Spleen (tissue), 13 donors: ENCODE measurements at regions of chr17 and their contacts with region 1.

Region 1: DNA sequence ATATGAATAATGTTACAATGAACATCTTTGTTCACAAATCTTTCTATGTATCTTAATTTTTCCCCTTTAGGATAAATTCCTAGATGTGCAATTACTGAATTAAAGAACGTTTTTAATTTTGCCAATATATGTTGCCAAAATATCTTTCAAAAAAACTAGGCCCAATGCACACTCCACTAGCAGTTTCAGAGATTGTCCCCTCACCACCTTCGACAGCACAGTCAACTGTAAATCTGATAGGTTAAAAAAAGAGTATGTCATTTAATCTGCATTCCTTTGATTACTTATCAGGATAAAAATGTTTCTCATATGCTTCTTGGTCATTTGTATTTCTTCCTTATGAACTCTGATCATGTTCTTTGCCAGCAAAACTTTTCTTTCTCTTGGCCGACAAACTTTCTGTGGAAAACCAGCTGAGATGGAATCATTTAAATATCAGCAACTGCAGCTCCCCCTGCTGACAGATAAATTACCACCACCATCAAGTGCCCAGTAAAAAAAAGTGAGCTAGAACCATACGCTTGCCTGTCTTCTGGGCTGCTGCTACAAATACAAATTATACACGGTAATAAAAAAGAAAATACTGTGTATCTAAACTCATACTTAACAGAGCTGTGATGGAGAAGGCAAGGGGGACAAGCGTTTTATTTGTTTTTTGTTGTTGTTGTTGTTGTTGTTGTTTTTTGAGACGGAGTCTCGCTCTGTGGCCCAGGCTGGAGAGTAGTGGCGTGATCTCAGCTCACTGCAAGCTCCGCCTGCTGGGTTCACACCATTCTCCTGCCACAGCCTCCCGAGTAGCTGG is 19.6 kb upstream of the KANSL1 start:
- DNase-seq: no peak
- H3K4me3 ChIP-seq: no peak overlapping the region
- H3K27ac ChIP-seq: no peak overlapping the region
- H3K4me1 ChIP-seq: peaks cover 4 to 28% (median 8%) of the 10 kb centered on the region in 6 donors
- H3K27me3 ChIP-seq: no peaks in the 10 kb centered on the region
- CTCF ChIP-seq: peak; percentile 64 to 89 (median 77)
- POLR2A ChIP-seq: no peak

Region 2: DNA sequence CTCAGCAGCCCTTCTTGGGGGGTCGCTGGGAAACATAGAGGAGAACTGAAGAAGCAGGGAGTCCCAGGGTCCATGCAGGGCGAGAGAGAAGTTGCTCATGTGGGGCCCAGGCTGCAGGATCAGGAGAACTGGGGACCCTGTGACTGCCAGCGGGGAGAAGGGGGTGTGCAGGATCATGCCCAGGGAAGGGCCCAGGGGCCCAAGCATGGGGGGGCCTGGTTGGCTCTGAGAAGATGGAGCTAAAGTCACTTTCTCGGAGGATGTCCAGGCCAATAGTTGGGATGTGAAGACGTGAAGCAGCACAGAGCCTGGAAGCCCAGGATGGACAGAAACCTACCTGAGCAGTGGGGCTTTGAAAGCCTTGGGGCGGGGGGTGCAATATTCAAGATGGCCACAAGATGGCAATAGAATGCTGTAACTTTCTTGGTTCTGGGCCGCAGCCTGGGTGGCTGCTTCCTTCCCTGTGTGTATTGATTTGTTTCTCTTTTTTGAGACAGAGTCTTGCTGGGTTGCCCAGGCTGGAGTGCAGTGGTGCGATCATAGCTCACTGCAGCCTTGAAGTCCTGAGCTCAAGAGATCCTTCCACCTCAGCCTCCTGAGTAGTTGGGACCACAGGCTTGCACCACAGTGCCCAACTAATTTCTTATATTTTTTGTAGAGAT is 210.4 kb before region 1 on chr17:
- intact Hi-C with region 1: loop called (anchors 5 kb)
- DNase-seq: peak; percentile 88
- H3K4me3 ChIP-seq: no peak overlapping the region
- H3K27ac ChIP-seq: no peak overlapping the region
- H3K4me1 ChIP-seq: peaks cover 0 to 8% (median 2%) of the 10 kb centered on the region in 6 donors
- H3K27me3 ChIP-seq: no peaks in the 10 kb centered on the region
- CTCF ChIP-seq: peak; percentile 91 to 99 (median 98)
- POLR2A ChIP-seq: no peak

Region 3: GRCh38 chr17:46044286-46044928 is 168.4 kb before region 1 on chr17:
- intact Hi-C with region 1: loop called (anchors 5 kb)
- DNase-seq: no peak
- H3K4me3 ChIP-seq: no peak overlapping the region
- H3K27ac ChIP-seq: peak overlapping the region in 4 of 8 donors; percentile 25 to 42 (median 34)
- H3K4me1 ChIP-seq: peaks cover 7 to 46% (median 17%) of the 10 kb centered on the region in 6 donors
- H3K27me3 ChIP-seq: no peaks in the 10 kb centered on the region
- CTCF ChIP-seq: peak; percentile 53 to 89 (median 77)
- POLR2A ChIP-seq: no peak

Region 4: DNA sequence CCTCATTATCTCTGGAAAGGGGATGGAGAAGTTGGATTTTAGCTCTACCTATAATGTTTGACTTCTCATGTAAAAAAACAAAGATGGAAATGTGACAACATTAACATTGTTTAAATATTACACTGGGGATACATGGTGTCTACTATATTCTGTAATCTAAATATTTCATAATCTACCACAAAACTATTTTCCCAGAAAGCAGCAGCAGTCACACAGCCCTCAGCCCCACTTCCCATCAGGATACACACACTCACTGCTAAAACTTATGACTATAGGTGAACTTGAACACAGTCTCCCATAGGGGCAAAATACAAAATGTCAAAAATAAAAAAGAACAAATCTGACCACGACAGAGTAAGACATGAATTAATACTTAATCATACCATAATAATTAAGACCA is 115.3 kb before region 1 on chr17:
- intact Hi-C with region 1: no loop called
- DNase-seq: no peak
- H3K4me3 ChIP-seq: no peak overlapping the region
- H3K27ac ChIP-seq: no peak overlapping the region
- H3K4me1 ChIP-seq: peaks cover 15 to 91% (median 50%) of the 10 kb centered on the region in 6 donors
- H3K27me3 ChIP-seq: no peaks in the 10 kb centered on the region
- CTCF ChIP-seq: no peak
- POLR2A ChIP-seq: no peak

Region 5: DNA sequence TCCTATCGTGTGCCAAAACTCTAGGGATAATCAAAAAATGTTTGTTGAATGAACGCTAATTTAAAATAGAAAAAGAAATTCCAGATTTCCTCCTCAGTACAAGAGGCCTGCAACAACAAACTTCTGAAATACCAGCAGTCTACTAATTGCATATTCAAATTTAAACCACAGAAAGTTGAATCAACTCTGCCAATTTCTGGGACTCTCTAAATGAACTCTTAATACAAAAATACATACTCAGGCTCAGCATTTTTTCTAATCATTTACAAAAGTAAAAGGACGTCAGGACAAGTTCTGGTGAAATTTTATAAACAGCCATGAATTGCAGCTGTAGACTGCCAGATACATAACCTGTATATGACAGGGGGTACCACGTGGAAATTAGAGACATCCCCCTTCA is 68.6 kb before region 1 on chr17:
- intact Hi-C with region 1: no loop called
- DNase-seq: no peak
- H3K4me3 ChIP-seq: no peak overlapping the region
- H3K27ac ChIP-seq: peak overlapping the region in 3 of 8 donors; percentile 40 to 45 (median 42)
- H3K4me1 ChIP-seq: peaks cover 77 to 100% (median 97%) of the 10 kb centered on the region in 6 donors
- H3K27me3 ChIP-seq: no peaks in the 10 kb centered on the region
- CTCF ChIP-seq: no peak
- POLR2A ChIP-seq: no peak